Activated T-helper 1 cell treated with anti-CD3 and anti-CD28 coated beads, Interleukin-12 subunit alpha, Interleukin-12 subunit beta, Interleukin-2, Interleukin-4 antibody, amounts not matched to agents 30 ng/mL and 10 ng/mL and 1 ng/mL, durations not matched to agents 14 hours and 24 hours and 36 hours (primary cell): ENCODE measurements at regions of chr16 and their contacts with region 1.

Region 1: GRCh38 chr16:29926005-29926710 is at the start of gene KCTD13:
- DNase-seq: peak; percentile 93
- H3K4me3 Mint-ChIP-seq: peak within 1 kb of the TSS; percentile 94
- H3K27ac Mint-ChIP-seq: peak within 1 kb of the TSS; percentile 95
- H3K4me1 Mint-ChIP-seq: peaks cover 31% of the 10 kb centered on the region
- H3K27me3 Mint-ChIP-seq: no peaks in the 10 kb centered on the region
- total RNA-seq, gene KCTD13: 53.7 and 58.2 TPM in 2 replicates

Region 2: GRCh38 chr16:29825145-29826044 is 100.8 kb before region 1 on chr16:
- intact Hi-C with region 1: loop called (anchors 2 kb)
- DNase-seq: peak; percentile 50
- H3K4me3 Mint-ChIP-seq: peak overlapping the region; percentile 68
- H3K27ac Mint-ChIP-seq: peak overlapping the region; percentile 85
- H3K4me1 Mint-ChIP-seq: peaks cover 42% of the 10 kb centered on the region
- H3K27me3 Mint-ChIP-seq: no peaks in the 10 kb centered on the region

Region 3: DNA sequence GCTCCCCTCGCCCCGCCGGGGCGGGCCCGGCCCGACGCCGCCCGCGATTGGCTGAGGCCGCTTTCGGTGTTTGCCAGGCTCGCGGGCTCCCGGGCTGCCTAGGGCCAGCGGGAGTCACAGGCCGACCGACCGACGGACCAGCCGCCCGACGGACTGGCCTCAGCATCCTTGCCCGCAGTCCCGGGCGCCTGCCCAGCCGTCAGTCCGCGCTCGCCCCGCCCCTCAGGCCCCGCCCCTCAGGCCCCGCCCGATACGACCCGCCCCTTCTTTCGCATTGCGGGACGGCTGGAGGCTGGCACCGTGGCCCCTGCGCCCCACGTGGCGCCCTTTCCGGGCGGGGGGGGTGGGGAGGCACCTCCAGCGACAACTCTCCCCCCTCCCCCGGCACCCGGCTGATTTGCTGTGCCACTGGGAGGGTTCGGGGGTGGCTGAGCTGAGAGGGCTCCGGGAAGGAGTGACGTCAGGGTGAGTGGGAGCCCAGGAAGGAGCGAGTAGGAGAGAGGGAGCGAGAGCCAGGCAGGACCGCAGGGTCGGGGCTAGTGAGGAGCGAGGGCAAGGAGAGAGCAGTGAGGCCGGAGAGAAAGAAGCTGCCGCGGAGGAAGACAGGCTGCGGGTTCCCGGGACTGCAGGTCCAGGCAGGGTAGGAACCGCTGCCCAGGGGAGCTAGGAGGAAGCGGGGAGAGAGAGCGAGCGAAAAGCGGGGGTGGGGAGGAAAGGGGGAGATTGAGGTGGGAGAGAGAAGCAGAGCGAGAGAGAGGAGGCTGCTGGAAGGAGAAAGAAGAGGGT is 25.9 kb before region 1 on chr16 and contains the start of gene ASPHD1:
- intact Hi-C with region 1: loop called (anchors 1 kb)
- DNase-seq: no peak
- H3K4me3 Mint-ChIP-seq: peak within 1 kb of the TSS; percentile 82
- H3K27ac Mint-ChIP-seq: peak within 1 kb of the TSS; percentile 58
- H3K4me1 Mint-ChIP-seq: peaks cover 14% of the 10 kb centered on the region
- H3K27me3 Mint-ChIP-seq: peaks cover 32% of the 10 kb centered on the region
- total RNA-seq, gene ASPHD1: 4.2 and 4.7 TPM in 2 replicates

Region 4: GRCh38 chr16:29943846-29944669 is 17.9 kb after region 1 on chr16:
- intact Hi-C with region 1: no loop called
- DNase-seq: no peak
- H3K4me3 Mint-ChIP-seq: no peak overlapping the region
- H3K27ac Mint-ChIP-seq: no peak overlapping the region
- H3K4me1 Mint-ChIP-seq: no peaks in the 10 kb centered on the region
- H3K27me3 Mint-ChIP-seq: peaks cover 29% of the 10 kb centered on the region

Region 5: GRCh38 chr16:29973384-29974246 is 47.5 kb after region 1 on chr16 and contains the start of gene TAOK2:
- intact Hi-C with region 1: loop called (anchors 1 kb)
- DNase-seq: peak; percentile 97
- H3K4me3 Mint-ChIP-seq: peak within 1 kb of the TSS; percentile 92
- H3K27ac Mint-ChIP-seq: peak within 1 kb of the TSS; percentile 91
- H3K4me1 Mint-ChIP-seq: peaks cover 36% of the 10 kb centered on the region
- H3K27me3 Mint-ChIP-seq: no peaks in the 10 kb centered on the region
- total RNA-seq, gene TAOK2: 38.5 and 39.7 TPM in 2 replicates

Region 6: DNA sequence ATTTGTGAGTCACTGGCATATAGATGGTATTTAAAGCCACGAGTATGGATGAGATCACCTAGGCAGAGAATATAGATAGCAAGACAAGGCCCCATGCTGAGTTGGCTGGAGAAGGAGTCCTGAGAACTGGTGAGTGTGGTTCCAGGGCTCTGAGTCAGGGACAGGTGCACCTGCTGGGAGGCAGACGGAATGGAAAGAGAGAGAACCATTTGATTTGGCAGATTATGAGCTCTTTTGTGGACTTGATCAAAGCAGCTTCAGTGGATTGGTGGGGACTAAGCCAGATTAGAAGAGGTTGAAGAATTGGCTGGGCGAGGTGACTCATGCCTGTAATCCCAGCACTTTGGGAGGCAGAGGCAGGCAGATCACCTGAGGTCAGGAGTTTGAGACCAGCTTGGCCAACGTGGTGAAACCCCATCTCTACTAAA is 92.6 kb after region 1 on chr16:
- intact Hi-C with region 1: loop called (anchors 1 kb)
- DNase-seq: no peak
- H3K4me3 Mint-ChIP-seq: no peak overlapping the region
- H3K27ac Mint-ChIP-seq: peak overlapping the region; percentile 1
- H3K4me1 Mint-ChIP-seq: peaks cover 17% of the 10 kb centered on the region
- H3K27me3 Mint-ChIP-seq: peaks cover 12% of the 10 kb centered on the region